ENCODE measurements at regions of chr19 and their contacts with region 1.

Region 1: GRCh38 chr19:48899781-48900476 is at the start of gene NUCB1:
- DNase-seq: peak; percentile 99 to 100
- ATAC-seq: peak; percentile 98
- H3K4me3 ChIP-seq: peak within 1 kb of the TSS; percentile 38 to 75
- H3K27ac ChIP-seq: peak within 1 kb of the TSS; percentile 15 to 66
- H3K4me1 ChIP-seq: peaks cover 0 to 1% of the 10 kb centered on the region in 2 donors
- H3K27me3 ChIP-seq: no peaks in the 10 kb centered on the region
- total RNA-seq, gene NUCB1: 276 to 380 TPM

Region 2: DNA sequence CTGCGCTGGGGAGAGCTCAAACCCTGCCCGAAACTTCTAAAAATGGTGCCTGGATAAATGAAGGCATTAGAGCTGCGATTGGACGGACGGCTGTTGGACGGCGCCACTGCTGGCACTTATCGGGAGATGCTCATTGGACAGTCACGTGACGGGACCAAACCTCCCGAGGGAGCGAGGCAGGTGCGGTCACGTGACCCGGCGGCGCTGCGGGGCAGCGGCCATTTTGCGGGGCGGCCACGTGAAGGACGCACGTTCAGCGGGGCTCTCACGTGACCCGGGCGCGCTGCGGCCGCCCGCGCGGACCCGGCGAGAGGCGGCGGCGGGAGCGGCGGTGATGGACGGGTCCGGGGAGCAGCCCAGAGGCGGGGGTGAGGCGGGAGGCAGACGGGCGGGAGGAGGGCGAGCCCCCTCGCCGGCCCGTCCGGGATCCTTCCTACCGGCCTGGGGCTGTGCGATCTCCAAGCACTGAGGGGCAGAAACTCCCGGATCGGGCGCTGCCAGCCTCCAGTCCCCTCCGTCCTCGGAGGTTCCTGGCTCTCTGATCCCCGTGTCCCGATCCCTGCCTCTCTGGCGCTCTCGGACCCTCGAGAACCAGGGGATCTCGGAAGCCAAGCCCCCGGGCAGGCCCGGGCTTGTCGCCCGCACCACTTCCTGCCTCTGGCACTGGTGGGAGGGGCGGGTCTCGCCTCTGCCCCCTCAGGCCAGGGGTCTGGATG is 54.8 kb after region 1 on chr19 and contains the start of gene BAX:
- intact Hi-C with region 1: loop called in 1 of 2 experiments (anchors 2 kb)
- DNase-seq: peak; percentile 97 to 99
- ATAC-seq: peak; percentile 96
- H3K4me3 ChIP-seq: peak within 1 kb of the TSS; percentile 73 to 77
- H3K27ac ChIP-seq: peak within 1 kb of the TSS; percentile 82 to 91
- H3K4me1 ChIP-seq: peaks cover 0 to 1% of the 10 kb centered on the region in 2 donors
- H3K27me3 ChIP-seq: no peaks in the 10 kb centered on the region
- total RNA-seq, gene BAX: 69.6 to 79.9 TPM